AG04449 (cell line): ENCODE measurements at regions of chr15 and their contacts with region 1.

Region 1: DNA sequence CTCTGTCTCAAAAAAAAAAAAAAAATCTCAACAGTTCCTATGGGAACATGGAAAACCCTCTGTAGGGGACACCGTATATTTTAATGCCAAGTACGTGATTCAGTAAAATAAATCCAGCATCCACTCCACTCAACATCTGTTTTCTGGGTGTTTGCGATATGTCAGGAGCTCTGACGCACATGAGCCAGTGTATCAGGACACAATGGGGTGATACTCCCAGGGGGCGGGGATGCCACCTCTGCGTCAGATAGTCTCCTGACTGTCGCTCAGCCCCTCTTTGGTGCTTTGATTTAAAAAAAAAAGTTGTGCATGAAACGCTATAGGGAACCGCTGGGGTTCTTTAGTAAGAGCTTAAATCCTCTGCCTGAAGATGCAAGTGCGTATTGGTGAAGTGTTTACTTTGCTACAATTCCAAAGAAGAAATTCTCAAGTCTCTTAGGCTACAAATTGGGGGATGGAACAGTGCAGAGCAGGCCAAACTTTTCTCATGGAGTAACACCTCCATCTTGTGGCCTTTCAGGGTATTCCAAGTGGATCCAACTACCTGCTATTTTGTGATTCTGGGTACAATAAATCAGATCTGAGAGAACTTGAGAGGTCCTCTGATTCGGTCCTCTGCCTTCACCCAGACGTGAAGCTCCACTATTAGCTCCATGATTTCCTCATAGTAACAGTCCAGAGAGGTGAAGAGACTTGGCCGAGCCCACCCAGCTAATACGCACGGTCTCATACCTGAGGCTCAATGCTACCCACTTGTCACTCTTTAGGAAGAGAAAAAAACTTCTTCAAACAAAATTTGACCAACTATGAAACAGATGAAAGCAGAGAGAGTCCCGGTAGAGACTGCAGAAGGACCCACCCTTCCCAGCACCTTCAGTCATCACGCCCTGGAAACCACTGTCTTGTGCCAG is 9.3 kb upstream of the NR2E3 start:
- DNase-seq: peak; percentile 73
- H3K4me3 ChIP-seq: no peak overlapping the region
- CTCF ChIP-seq: peak; percentile 64

Region 2: GRCh38 chr15:71386448-71387236 is 414.4 kb before region 1 on chr15:
- CTCF ChIA-PET with region 1: interaction called, 35 read pairs
- POLR2A ChIA-PET with region 1: no interaction called
- DNase-seq: no peak
- H3K4me3 ChIP-seq: no peak overlapping the region
- CTCF ChIP-seq: peak; percentile 0

Region 3: GRCh38 chr15:71559098-71559497 is 242.0 kb before region 1 on chr15:
- CTCF ChIA-PET with region 1: no interaction called
- POLR2A ChIA-PET with region 1: no interaction called
- DNase-seq: peak; percentile 24
- H3K4me3 ChIP-seq: no peak overlapping the region
- CTCF ChIP-seq: no peak

Region 4: GRCh38 chr15:71575474-71576045 is 225.5 kb before region 1 on chr15:
- CTCF ChIA-PET with region 1: interaction called, 20 read pairs
- POLR2A ChIA-PET with region 1: no interaction called
- DNase-seq: no peak
- H3K4me3 ChIP-seq: no peak overlapping the region
- CTCF ChIP-seq: peak; percentile 38

Region 5: GRCh38 chr15:71761649-71762369 is 39.3 kb before region 1 on chr15:
- CTCF ChIA-PET with region 1: interaction called, 11 read pairs
- POLR2A ChIA-PET with region 1: no interaction called
- DNase-seq: no peak
- H3K4me3 ChIP-seq: no peak overlapping the region
- CTCF ChIP-seq: no peak

Region 6: GRCh38 chr15:71844916-71845315 is 43.8 kb after region 1 on chr15:
- CTCF ChIA-PET with region 1: interaction called, 10 read pairs
- POLR2A ChIA-PET with region 1: no interaction called
- DNase-seq: no peak
- H3K4me3 ChIP-seq: no peak overlapping the region
- CTCF ChIP-seq: no peak

Region 7: GRCh38 chr15:72037321-72037720 is 236.2 kb after region 1 on chr15:
- CTCF ChIA-PET with region 1: no interaction called
- POLR2A ChIA-PET with region 1: no interaction called
- DNase-seq: no peak
- H3K4me3 ChIP-seq: no peak overlapping the region
- CTCF ChIP-seq: no peak